PC-9 (cell line): ENCODE measurements at regions of chr7 and their contacts with region 1.

Region 1: DNA sequence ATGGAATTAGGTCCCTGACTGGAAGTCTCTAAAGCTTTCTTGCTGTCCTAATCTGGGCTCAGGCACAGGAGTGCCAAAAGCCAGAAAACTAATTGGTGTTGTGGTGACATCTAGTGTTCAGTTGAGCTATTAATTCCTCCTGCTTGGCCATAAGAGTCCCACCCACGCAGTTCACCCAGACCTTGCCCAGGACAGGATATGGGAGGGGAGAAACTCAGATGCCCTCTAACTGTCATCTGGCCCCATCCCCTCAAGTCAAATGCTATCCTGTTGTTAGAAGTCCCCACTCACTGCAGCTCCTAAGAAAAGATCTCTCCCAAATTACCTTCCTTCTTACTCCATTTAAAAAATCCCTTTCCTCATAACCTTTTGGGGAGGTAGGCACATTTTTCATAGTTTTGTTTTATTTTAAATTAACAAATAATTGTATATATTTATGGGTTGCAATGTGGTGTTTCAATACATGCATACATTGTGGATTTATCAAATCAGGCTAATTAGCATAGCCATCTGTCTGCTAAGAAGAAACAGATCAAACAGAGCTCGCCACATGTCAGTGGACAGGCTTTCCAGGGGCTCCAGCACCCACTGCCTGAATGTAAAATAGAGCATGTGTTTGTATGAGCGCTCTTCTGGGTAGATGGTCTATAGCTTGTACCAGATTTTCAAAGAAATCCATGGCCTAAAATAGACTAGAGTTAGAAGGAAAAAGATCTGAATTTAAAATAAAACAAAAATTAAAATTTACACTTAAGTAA is 84.0 kb downstream of the GSAP start:
- DNase-seq: peak; percentile 59 to 61
- H3K4me3 ChIP-seq: no peak overlapping the region
- H3K27ac ChIP-seq: no peak overlapping the region
- H3K4me1 ChIP-seq: peaks cover 28% of the 10 kb centered on the region
- H3K27me3 ChIP-seq: no peaks in the 10 kb centered on the region
- CTCF ChIP-seq: peak; percentile 73

Region 2: DNA sequence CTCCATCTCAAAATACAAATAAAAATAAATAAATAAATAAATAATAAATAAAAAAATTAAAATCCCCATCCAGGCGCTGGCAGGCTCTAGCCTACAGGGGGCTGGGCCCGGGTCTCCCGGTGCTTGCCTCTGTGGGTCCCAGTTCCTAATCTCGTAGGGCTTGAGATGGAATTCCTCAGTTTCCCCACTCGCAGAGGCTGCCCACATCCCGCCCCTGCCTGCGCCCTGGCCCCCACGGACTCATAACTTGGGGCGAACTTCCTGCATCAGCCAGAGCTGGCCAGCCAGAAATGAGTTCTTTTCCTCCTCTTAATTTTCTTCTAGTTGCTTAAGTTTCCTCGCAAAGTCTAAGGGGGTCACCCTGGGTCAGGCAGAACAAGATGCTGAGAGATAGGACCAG is 1152.4 kb before region 1 on chr7:
- CTCF ChIA-PET with region 1: no interaction called
- POLR2A ChIA-PET with region 1: no interaction called
- intact Hi-C with region 1: loop called (anchors 5 kb)
- DNase-seq: no peak
- H3K4me3 ChIP-seq: no peak overlapping the region
- H3K27ac ChIP-seq: no peak overlapping the region
- H3K4me1 ChIP-seq: no peaks in the 10 kb centered on the region
- H3K27me3 ChIP-seq: no peaks in the 10 kb centered on the region
- CTCF ChIP-seq: no peak

Region 3: GRCh38 chr7:77247206-77247850 is 84.8 kb before region 1 on chr7:
- CTCF ChIA-PET with region 1: interaction called, 25 read pairs
- POLR2A ChIA-PET with region 1: no interaction called
- intact Hi-C with region 1: loop called (anchors 2 kb)
- DNase-seq: peak; percentile 61 to 70
- H3K4me3 ChIP-seq: no peak overlapping the region
- H3K27ac ChIP-seq: no peak overlapping the region
- H3K4me1 ChIP-seq: no peaks in the 10 kb centered on the region
- H3K27me3 ChIP-seq: no peaks in the 10 kb centered on the region
- CTCF ChIP-seq: peak; percentile 94

Region 4: GRCh38 chr7:77354484-77354883 is 22.4 kb after region 1 on chr7:
- CTCF ChIA-PET with region 1: interaction called, 14 read pairs
- POLR2A ChIA-PET with region 1: no interaction called
- intact Hi-C with region 1: no loop called
- DNase-seq: no peak
- H3K4me3 ChIP-seq: no peak overlapping the region
- H3K27ac ChIP-seq: no peak overlapping the region
- H3K4me1 ChIP-seq: 0 out of 2 replicates have a peak, but pooled peaks cover under 1% of the 10 kb centered on the region
- H3K27me3 ChIP-seq: no peaks in the 10 kb centered on the region
- CTCF ChIP-seq: no peak